Heart right ventricle (tissue), 16 donors: ENCODE measurements at regions of chr14 and their contacts with region 1.

Region 1: DNA sequence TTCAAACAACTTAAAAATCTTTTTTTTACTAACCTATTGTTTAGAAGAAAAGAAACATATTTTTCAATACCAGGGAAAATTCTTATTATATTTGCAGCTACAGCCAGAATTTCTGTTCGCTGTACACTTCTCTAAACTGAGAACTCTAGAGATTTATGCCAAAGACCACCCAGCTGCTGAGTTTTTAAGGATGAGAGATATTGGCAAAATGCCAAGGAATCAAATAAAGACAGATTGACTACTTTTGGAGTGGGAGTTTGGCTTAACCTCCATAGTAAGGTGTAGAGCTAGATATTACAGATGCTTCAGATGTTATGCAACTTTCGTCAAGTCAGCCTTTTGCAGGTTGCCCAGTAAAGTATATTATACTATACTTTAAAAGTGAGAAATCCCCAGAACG is 71.8 kb downstream of the TTLL5 start:
- DNase-seq: no peak
- ATAC-seq: no peak
- H3K4me3 ChIP-seq: no peak overlapping the region
- H3K27ac ChIP-seq: no peak overlapping the region
- H3K4me1 ChIP-seq: peaks cover 0 to 3% (median 0%) of the 10 kb centered on the region in 9 donors
- H3K27me3 ChIP-seq: no peaks in the 10 kb centered on the region
- CTCF ChIP-seq: no peak

Region 2: GRCh38 chr14:74875941-74876913 is 856.7 kb before region 1 on chr14 and contains the start of gene PROX2:
- intact Hi-C with region 1: no loop called
- DNase-seq: no peak
- ATAC-seq: peak in 3 of 8 donors; percentile 16 to 49 (median 30)
- H3K4me3 ChIP-seq: no peak within 1 kb of the TSS
- H3K27ac ChIP-seq: peak within 1 kb of the TSS in 1 of 10 donors; percentile 31
- H3K4me1 ChIP-seq: peaks cover 0 to 19% (median 6%) of the 10 kb centered on the region in 9 donors
- H3K27me3 ChIP-seq: no peaks in the 10 kb centered on the region
- CTCF ChIP-seq: no peak
- total RNA-seq, gene PROX2: not detected

Region 3: DNA sequence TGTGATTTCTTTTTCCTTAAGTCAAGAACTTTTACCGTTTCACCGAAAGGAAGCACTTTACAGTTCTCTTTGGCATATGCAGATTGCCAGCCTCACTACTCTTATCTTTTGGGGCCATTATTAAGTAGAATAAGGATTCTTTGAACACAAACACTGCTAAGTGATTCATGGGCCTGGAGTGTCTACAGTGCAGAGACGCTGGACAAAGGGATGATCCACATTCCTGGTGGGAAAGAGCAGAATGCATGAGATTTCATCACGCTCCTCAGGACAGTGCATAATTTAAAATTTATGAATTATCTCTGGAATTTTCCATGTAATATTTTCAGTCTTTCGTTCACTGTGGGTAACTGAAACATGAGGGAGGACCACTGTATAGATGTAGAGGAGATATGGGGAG is 18.4 kb after region 1 on chr14:
- intact Hi-C with region 1: loop called in 1 of 10 experiments (anchors 1 kb)
- DNase-seq: no peak
- ATAC-seq: no peak
- H3K4me3 ChIP-seq: no peak overlapping the region
- H3K27ac ChIP-seq: no peak overlapping the region
- H3K4me1 ChIP-seq: peaks cover 0 to 7% (median 0%) of the 10 kb centered on the region in 9 donors
- H3K27me3 ChIP-seq: no peaks in the 10 kb centered on the region
- CTCF ChIP-seq: no peak